ENCODE measurements at regions of chr12 and their contacts with region 1.

Region 1: DNA sequence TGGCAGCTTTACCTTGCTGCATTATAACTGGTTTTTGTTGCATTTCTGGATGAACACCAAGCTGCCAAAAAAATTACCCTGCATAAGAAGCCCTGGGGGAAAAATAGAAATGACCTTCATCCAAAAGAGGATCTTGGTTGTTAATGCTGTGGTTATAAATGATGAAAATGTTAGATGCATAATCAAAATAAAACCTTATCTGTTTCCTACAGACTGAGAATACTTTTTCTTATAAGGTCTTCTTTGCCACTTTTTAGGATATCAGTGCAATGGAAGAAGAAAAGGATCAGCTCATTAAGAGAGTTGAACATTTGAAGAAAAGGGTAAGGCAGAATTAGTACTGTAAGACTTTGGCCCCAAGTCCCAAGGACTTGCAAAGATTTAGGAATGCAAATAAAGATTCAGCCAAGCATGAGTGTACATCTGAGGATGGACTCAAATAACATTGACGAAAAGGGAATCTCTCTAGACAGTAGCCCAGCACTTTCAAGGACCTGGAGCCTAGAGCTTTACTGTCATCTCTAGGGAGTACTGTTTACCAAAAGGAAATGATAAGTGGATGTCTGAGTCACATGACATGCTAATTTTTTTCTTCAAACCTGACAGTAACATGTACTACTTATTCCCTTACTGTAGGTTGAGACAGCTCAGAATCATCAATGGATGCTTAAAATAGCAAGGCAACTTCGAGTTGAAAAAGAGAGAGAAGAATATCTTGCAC is 10.7 kb downstream of the IFT81 start:
- DNase-seq: peak; percentile 95
- ATAC-seq: peak; percentile 99
- H3K4me3 ChIP-seq: no peak overlapping the region
- H3K27ac ChIP-seq: peak overlapping the region; percentile 17; the same call in 1 of the 2 replicates
- H3K4me1 ChIP-seq: peaks cover 3% of the 10 kb centered on the region; the same call in 1 of the 2 replicates
- H3K27me3 ChIP-seq: no peaks in the 10 kb centered on the region
- CTCF ChIP-seq: no peak
- POLR2A ChIP-seq: no peak
- RAD21 ChIP-seq: no peak

Region 2: GRCh38 chr12:109680264-109681005 is 454.4 kb before region 1 on chr12:
- CTCF ChIA-PET with region 1: no interaction called
- POLR2A ChIA-PET with region 1: no interaction called
- dilution Hi-C with region 1: no loop called
- in situ Hi-C with region 1: no loop called
- intact Hi-C with region 1: no loop called
- DNase-seq: no peak
- ATAC-seq: no peak
- H3K4me3 ChIP-seq: no peak overlapping the region
- H3K27ac ChIP-seq: no peak overlapping the region
- H3K4me1 ChIP-seq: no peaks in the 10 kb centered on the region
- H3K27me3 ChIP-seq: peaks cover 30% of the 10 kb centered on the region
- CTCF ChIP-seq: no peak
- POLR2A ChIP-seq: no peak
- RAD21 ChIP-seq: no peak

Region 3: DNA sequence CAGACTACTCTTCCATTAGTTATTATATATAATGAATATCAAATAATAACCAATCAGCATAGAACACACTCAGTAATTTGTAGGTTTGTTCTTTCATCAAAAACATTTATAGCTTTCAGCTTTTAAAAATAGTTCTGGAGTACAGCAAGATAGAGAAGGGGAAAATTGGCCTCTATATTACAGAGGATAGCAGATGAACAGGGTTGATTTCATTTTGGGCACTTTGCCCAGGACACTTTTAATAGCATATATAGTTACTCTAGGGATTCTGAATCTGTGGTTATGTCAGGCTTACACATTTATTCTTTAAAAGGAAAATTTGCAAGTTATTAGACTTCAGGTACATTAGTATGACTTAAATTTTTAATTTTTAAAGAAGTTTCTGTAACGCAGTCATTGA is 41.9 kb after region 1 on chr12:
- CTCF ChIA-PET with region 1: no interaction called
- POLR2A ChIA-PET with region 1: no interaction called
- dilution Hi-C with region 1: no loop called
- in situ Hi-C with region 1: no loop called
- intact Hi-C with region 1: loop called (anchors 5 kb)
- DNase-seq: peak; percentile 59
- ATAC-seq: no peak
- H3K4me3 ChIP-seq: no peak overlapping the region
- H3K27ac ChIP-seq: no peak overlapping the region
- H3K4me1 ChIP-seq: peaks cover 4% of the 10 kb centered on the region
- H3K27me3 ChIP-seq: no peaks in the 10 kb centered on the region
- CTCF ChIP-seq: no peak
- POLR2A ChIP-seq: no peak
- RAD21 ChIP-seq: no peak

Region 4: DNA sequence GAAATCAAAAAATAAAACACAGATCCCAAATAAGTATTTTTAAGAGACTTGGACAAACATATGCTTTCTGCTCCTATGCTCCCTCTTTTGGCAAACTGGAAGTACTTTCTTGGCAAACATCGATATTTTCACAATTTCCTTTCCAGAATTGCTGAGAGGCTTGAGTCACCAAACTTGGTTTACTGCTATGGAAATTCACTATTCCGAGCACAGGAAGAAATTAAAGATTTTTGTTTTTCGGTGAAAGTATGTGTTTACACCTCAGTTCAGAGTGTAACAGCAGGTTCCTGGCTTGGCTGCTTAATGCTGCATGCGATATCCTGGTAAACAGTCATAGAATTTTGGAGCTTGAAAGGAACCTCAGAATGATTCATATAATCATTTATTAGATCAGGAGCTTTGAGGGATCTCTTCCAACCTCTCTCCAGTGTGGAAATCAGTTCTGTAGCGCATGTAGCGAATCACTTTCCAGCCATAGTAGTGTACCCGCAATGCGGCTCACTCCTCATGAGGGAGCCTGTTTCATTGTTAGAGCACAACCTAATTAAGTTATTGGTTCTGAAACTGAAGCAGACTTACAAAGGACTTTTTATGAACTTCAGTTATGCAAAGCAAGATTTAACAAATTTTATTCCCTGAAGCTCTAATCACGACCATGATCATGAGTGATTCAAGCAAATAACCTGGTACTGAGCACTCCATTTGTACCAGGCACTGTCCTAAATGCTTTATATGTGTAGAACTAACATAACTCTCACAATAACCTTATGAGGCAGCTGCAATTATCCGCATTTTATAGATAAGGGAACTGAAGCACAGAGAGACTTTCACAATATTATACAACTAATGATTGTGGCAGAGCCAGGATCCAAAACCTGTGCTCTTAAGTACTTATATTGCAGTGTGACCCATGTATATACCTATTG is 89.8 kb after region 1 on chr12:
- CTCF ChIA-PET with region 1: no interaction called
- POLR2A ChIA-PET with region 1: no interaction called
- dilution Hi-C with region 1: no loop called
- in situ Hi-C with region 1: no loop called
- intact Hi-C with region 1: loop called (anchors 5 kb)
- DNase-seq: peak; percentile 89
- ATAC-seq: peak; percentile 90
- H3K4me3 ChIP-seq: peak overlapping the region; percentile 25; the same call in 1 of the 2 replicates
- H3K27ac ChIP-seq: peak overlapping the region; percentile 73; the same call in 1 of the 2 replicates
- H3K4me1 ChIP-seq: peaks cover 5% of the 10 kb centered on the region; the same call in 1 of the 2 replicates
- H3K27me3 ChIP-seq: no peaks in the 10 kb centered on the region
- CTCF ChIP-seq: peak; percentile 77
- POLR2A ChIP-seq: no peak
- RAD21 ChIP-seq: peak; percentile 72

Region 5: GRCh38 chr12:110312581-110313360 is 177.9 kb after region 1 on chr12:
- CTCF ChIA-PET with region 1: no interaction called
- POLR2A ChIA-PET with region 1: interaction called, 19 read pairs
- dilution Hi-C with region 1: no loop called
- in situ Hi-C with region 1: no loop called
- intact Hi-C with region 1: no loop called
- DNase-seq: peak; percentile 72
- ATAC-seq: 0 out of 2 replicates have a peak, but pooled peaks have one; percentile 18
- H3K4me3 ChIP-seq: no peak overlapping the region
- H3K27ac ChIP-seq: peak overlapping the region; percentile 92
- H3K4me1 ChIP-seq: peaks cover 23% of the 10 kb centered on the region
- H3K27me3 ChIP-seq: no peaks in the 10 kb centered on the region
- CTCF ChIP-seq: no peak
- POLR2A ChIP-seq: no peak
- RAD21 ChIP-seq: no peak